Activated CD8-positive, alpha-beta T cell treated with anti-CD3 and anti-CD28 coated beads for 36 hours (primary cell): ENCODE measurements at regions of chr17 and their contacts with region 1.

Region 1: GRCh38 chr17:39653662-39654331 is 11.4 kb upstream of the TCAP start:
- DNase-seq: peak; percentile 89
- ATAC-seq: peak; percentile 91
- H3K4me3 Mint-ChIP-seq: no peak overlapping the region
- H3K27ac Mint-ChIP-seq: no peak overlapping the region
- H3K4me1 Mint-ChIP-seq: peaks cover 48% of the 10 kb centered on the region
- H3K27me3 Mint-ChIP-seq: no peaks in the 10 kb centered on the region
- CTCF ChIP-seq: peak; percentile 96

Region 2: DNA sequence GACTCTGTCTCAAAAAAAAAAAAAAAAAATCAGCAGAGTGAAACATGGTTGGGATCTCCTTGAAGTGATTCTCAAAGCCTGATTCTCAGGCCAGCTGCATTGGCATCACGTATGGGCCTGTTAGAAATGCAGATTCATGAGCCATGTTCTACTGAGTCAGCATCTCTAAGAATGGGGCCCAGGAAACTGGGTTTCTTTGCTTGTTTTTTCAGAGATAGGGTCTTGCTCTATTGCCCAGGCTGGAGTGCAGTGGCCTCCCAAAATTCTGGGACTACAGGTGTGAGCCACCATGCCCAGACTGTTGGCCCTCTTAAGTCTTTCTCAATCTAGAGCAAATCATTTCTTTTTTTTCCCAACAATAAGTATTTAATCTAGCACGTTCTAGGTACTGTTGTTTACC is 144.8 kb before region 1 on chr17:
- CTCF ChIA-PET with region 1: no interaction called
- POLR2A ChIA-PET with region 1: no interaction called
- intact Hi-C with region 1: no loop called
- DNase-seq: no peak
- ATAC-seq: no peak
- H3K4me3 Mint-ChIP-seq: no peak overlapping the region
- H3K27ac Mint-ChIP-seq: no peak overlapping the region
- H3K4me1 Mint-ChIP-seq: peaks cover 7% of the 10 kb centered on the region
- H3K27me3 Mint-ChIP-seq: no peaks in the 10 kb centered on the region
- CTCF ChIP-seq: no peak

Region 3: GRCh38 chr17:39628655-39629493 is 24.9 kb before region 1 on chr17:
- CTCF ChIA-PET with region 1: interaction called, 111 read pairs
- POLR2A ChIA-PET with region 1: interaction called, 3 read pairs
- intact Hi-C with region 1: no loop called
- DNase-seq: no peak
- ATAC-seq: no peak
- H3K4me3 Mint-ChIP-seq: no peak overlapping the region
- H3K27ac Mint-ChIP-seq: no peak overlapping the region
- H3K4me1 Mint-ChIP-seq: peaks cover 11% of the 10 kb centered on the region
- H3K27me3 Mint-ChIP-seq: peaks cover 28% of the 10 kb centered on the region
- CTCF ChIP-seq: no peak

Region 4: DNA sequence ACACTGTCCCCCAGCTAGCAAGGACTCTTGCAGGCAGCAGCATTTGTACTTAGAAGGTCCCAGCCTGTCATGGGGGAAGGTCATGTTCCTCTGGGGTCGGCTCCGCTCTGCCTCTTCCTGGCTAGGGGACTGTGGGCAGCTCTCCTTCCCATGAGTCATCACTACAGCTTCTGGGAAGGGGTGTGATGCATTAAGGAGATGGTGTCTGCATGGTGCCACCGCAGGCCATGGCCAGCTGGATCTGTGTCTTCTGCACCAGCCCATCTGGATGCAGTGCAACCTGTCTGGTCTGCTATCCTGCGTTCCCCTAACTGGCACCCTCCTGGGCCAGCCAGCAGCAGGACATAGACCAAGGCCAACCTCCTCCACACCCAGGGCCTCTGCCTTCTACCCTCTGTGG is 10.5 kb before region 1 on chr17:
- CTCF ChIA-PET with region 1: interaction called, 58 read pairs
- POLR2A ChIA-PET with region 1: no interaction called
- intact Hi-C with region 1: no loop called
- DNase-seq: no peak
- ATAC-seq: peak; percentile 12
- H3K4me3 Mint-ChIP-seq: no peak overlapping the region
- H3K27ac Mint-ChIP-seq: no peak overlapping the region
- H3K4me1 Mint-ChIP-seq: peaks cover 58% of the 10 kb centered on the region
- H3K27me3 Mint-ChIP-seq: no peaks in the 10 kb centered on the region
- CTCF ChIP-seq: no peak

Region 5: GRCh38 chr17:39676198-39676819 is 22.5 kb after region 1 on chr17:
- CTCF ChIA-PET with region 1: interaction called, 146 read pairs
- POLR2A ChIA-PET with region 1: interaction called, 6 read pairs
- intact Hi-C with region 1: no loop called
- DNase-seq: peak; percentile 76
- ATAC-seq: peak; percentile 78
- H3K4me3 Mint-ChIP-seq: no peak overlapping the region
- H3K27ac Mint-ChIP-seq: peak overlapping the region; percentile 59
- H3K4me1 Mint-ChIP-seq: peaks cover 65% of the 10 kb centered on the region
- H3K27me3 Mint-ChIP-seq: no peaks in the 10 kb centered on the region
- CTCF ChIP-seq: no peak

Region 6: GRCh38 chr17:39730095-39730921 is 76.5 kb after region 1 on chr17 and contains the start of gene MIEN1:
- CTCF ChIA-PET with region 1: interaction called, 20 read pairs
- POLR2A ChIA-PET with region 1: no interaction called
- intact Hi-C with region 1: no loop called
- DNase-seq: peak; percentile 94
- ATAC-seq: peak; percentile 96
- H3K4me3 Mint-ChIP-seq: peak within 1 kb of the TSS; percentile 93
- H3K27ac Mint-ChIP-seq: peak within 1 kb of the TSS; percentile 91
- H3K4me1 Mint-ChIP-seq: peaks cover 17% of the 10 kb centered on the region
- H3K27me3 Mint-ChIP-seq: no peaks in the 10 kb centered on the region
- CTCF ChIP-seq: peak; percentile 99
- total RNA-seq, gene MIEN1: 32.5 to 34.0 TPM

Region 7: GRCh38 chr17:39794249-39794970 is 140.6 kb after region 1 on chr17:
- CTCF ChIA-PET with region 1: no interaction called
- POLR2A ChIA-PET with region 1: no interaction called
- intact Hi-C with region 1: no loop called
- DNase-seq: peak; percentile 62
- ATAC-seq: peak; percentile 58
- H3K4me3 Mint-ChIP-seq: peak overlapping the region; percentile 9
- H3K27ac Mint-ChIP-seq: peak overlapping the region; percentile 84
- H3K4me1 Mint-ChIP-seq: peaks cover 75% of the 10 kb centered on the region
- H3K27me3 Mint-ChIP-seq: no peaks in the 10 kb centered on the region
- CTCF ChIP-seq: no peak

Region 8: GRCh38 chr17:40015005-40015997 is 361.5 kb after region 1 on chr17 and contains the start of gene CSF3:
- CTCF ChIA-PET with region 1: no interaction called
- POLR2A ChIA-PET with region 1: no interaction called
- intact Hi-C with region 1: no loop called
- DNase-seq: no peak
- ATAC-seq: no peak
- H3K4me3 Mint-ChIP-seq: no peak within 1 kb of the TSS
- H3K27ac Mint-ChIP-seq: no peak within 1 kb of the TSS
- H3K4me1 Mint-ChIP-seq: peaks cover 3% of the 10 kb centered on the region
- H3K27me3 Mint-ChIP-seq: peaks cover 2% of the 10 kb centered on the region
- CTCF ChIP-seq: no peak
- total RNA-seq, gene CSF3: not detected